ENCODE measurements at regions of chr12 and their contacts with region 1.

Region 1: GRCh38 chr12:110600254-110600653 is 13.7 kb upstream of the TCTN1 start:
- DNase-seq: peak; percentile 44
- CTCF ChIP-seq: peak; percentile 15

Region 2: GRCh38 chr12:110468212-110469048 is 131.8 kb before region 1 on chr12 and contains the starts of genes FAM216A and GPN3:
- CTCF ChIA-PET with region 1: interaction called, 71 read pairs
- POLR2A ChIA-PET with region 1: interaction called, 6 read pairs
- DNase-seq: peak; percentile 96
- CTCF ChIP-seq: no peak

Region 3: DNA sequence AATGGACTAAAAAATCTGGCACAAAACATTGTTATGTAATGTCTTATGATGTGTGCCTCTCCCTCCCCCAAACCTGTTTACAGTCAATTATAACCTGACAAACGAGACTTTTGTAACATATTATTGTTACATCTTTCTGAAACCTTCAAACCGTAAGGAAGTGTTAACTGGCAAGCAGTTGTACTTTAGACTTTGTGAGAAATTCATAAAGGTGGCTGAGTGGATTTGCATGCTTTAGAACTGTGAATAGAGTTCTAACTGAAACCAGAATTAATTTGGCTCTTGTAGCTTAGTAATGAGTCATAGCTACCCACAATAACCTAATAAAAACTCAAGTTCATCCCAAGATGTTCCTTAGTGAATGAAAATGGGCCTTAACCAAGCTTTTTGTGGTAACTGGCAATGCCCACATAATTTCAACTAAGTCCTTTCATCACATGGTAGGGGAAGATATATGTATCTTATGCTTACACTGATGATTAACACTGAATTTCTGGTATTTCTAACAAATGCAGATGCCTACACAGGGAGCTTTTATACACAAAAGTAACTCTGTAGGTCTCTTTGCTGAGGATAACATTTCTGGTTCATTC is 68.4 kb before region 1 on chr12:
- CTCF ChIA-PET with region 1: interaction called, 70 read pairs
- POLR2A ChIA-PET with region 1: no interaction called
- DNase-seq: peak; percentile 76
- CTCF ChIP-seq: no peak

Region 4: DNA sequence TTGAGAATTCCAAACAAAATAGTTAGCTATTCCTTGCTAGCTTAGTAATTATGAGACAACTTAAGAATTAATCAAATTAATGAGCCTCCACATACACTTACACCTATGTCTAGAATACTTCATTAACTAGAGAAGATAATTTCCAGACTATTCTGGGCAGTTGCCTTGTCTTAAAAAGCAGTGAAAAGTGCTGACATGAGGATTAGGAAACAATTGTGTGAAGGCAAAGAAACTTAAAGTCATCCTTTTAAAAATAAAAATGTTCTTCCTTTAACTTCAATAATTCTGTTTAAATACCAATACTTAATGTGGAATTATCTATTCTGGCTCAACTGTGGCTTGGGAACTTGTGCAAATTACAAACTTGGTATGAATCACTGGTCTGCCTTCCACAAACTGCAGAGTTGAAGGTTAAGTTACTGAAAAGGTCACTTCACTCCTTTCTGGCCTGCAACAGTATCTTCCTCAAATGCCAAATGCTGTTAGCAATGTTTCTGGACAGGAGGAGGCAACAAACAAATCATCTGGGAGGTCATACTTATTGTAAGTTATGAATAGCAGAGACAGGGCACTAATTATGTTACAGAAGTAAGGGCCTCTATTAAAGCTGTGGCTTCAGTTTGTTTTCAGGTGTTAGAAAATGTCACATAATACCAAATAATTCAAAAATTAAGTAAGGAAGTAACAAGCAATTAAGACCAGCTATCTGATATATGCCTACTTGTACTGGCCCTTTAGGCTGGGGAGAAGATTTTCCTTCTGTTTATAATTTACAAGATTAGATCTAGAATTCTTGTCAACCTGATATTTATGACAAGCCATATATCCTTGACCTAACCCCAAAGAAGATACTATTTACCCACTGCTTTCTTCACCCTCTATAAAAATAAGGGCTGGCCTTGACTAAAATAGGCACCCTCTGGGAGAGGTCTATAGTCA is 36.3 kb before region 1 on chr12:
- CTCF ChIA-PET with region 1: interaction called, 19 read pairs
- POLR2A ChIA-PET with region 1: no interaction called
- DNase-seq: no peak
- CTCF ChIP-seq: no peak

Region 5: DNA sequence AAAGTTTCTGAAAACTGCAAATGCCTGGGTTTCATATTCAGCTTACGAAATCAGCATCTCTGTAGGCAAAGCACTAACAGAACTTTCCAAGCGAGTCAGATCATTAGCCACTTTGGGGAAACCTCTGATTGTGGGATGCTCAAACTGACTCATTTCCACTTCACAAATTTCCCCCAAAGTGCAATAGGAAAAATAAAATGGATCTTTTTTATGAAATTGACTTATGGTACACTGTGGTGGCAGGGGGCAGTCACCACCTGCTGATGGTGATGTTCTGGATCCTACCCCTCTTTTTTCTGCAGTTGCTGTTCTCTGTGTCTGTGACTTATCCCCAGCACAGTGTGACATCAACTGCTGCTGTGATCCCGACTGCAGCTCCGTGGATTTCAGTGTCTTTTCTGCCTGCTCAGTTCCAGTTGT is 19.3 kb after region 1 on chr12:
- CTCF ChIA-PET with region 1: interaction called, 32 read pairs
- POLR2A ChIA-PET with region 1: no interaction called
- DNase-seq: peak; percentile 54
- CTCF ChIP-seq: peak; percentile 29

Measured in GM10248 (cell line).